Left ventricle myocardium inferior (tissue), 1 donor: ENCODE measurements at regions of chr22 and their contacts with region 1.

Region 1: GRCh38 chr22:20456064-20456721 is 18.6 kb upstream of the SCARF2 start:
- DNase-seq: peak; percentile 69
- H3K4me3 ChIP-seq: no peak overlapping the region
- H3K27ac ChIP-seq: no peak overlapping the region
- H3K4me1 ChIP-seq: peaks cover 4% of the 10 kb centered on the region
- H3K27me3 ChIP-seq: no peaks in the 10 kb centered on the region
- CTCF ChIP-seq: peak; percentile 97

Region 2: DNA sequence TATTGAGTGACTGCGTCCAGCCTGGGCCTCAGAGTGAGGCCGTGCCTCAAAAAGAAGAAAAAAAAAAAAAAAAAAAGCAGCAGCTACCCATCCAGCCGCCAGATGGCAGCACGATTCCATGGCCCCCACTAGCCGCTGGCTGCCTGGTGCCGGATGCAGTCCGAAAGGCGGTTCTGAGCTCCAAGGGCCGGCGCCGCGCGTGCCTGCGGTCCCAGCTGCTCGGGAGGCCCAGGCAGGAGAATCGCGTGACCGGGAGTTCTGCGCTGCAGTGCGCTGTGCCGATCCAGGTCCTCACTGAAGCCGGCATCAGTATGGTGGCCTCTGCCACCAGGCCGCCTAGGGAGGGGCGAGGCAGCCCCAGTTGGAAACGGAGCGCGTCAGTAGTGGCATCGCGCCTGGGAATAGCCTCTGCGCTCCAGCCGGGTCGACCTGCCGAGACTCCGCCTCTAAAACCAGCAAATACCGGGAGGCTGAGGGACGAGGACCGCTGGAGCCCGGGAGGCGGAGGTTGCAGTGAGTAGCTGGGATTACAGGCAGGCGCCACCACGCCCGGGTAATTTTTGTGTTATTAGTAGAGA is 37.9 kb before region 1 on chr22:
- intact Hi-C with region 1: loop called (anchors 5 kb)
- DNase-seq: peak; percentile 84
- H3K4me3 ChIP-seq: peak overlapping the region; percentile 60
- H3K27ac ChIP-seq: peak overlapping the region; percentile 55
- H3K4me1 ChIP-seq: peaks cover 13% of the 10 kb centered on the region
- H3K27me3 ChIP-seq: no peaks in the 10 kb centered on the region
- CTCF ChIP-seq: peak; percentile 91